ENCODE measurements at regions of chr6 and their contacts with region 1.

Region 1: GRCh38 chr6:33323623-33323948 is 6.0 kb upstream of the ZBTB22 start:
- DNase-seq: no peak
- H3K4me3 Mint-ChIP-seq: peak overlapping the region; percentile 93
- H3K27ac Mint-ChIP-seq: peak overlapping the region; percentile 94
- H3K4me1 Mint-ChIP-seq: peaks cover 39% of the 10 kb centered on the region
- H3K27me3 Mint-ChIP-seq: no peaks in the 10 kb centered on the region

Region 2: GRCh38 chr6:33288921-33289748 is 34.5 kb before region 1 on chr6 and contains the starts of genes PFDN6 and WDR46:
- intact Hi-C with region 1: loop called (anchors 1 kb)
- DNase-seq: peak; percentile 95
- H3K4me3 Mint-ChIP-seq: peak within 1 kb of the TSS; percentile 100
- H3K27ac Mint-ChIP-seq: peak within 1 kb of the TSS; percentile 95
- H3K4me1 Mint-ChIP-seq: peaks cover 28% of the 10 kb centered on the region
- H3K27me3 Mint-ChIP-seq: no peaks in the 10 kb centered on the region
- total RNA-seq, gene PFDN6: 114 and 132 TPM in 2 replicates
- total RNA-seq, gene WDR46: 106 and 120 TPM in 2 replicates

Region 3: GRCh38 chr6:33305052-33305451 is 18.5 kb before region 1 on chr6:
- intact Hi-C with region 1: no loop called
- DNase-seq: no peak
- H3K4me3 Mint-ChIP-seq: no peak overlapping the region
- H3K27ac Mint-ChIP-seq: no peak overlapping the region
- H3K4me1 Mint-ChIP-seq: peaks cover 28% of the 10 kb centered on the region
- H3K27me3 Mint-ChIP-seq: no peaks in the 10 kb centered on the region

Region 4: DNA sequence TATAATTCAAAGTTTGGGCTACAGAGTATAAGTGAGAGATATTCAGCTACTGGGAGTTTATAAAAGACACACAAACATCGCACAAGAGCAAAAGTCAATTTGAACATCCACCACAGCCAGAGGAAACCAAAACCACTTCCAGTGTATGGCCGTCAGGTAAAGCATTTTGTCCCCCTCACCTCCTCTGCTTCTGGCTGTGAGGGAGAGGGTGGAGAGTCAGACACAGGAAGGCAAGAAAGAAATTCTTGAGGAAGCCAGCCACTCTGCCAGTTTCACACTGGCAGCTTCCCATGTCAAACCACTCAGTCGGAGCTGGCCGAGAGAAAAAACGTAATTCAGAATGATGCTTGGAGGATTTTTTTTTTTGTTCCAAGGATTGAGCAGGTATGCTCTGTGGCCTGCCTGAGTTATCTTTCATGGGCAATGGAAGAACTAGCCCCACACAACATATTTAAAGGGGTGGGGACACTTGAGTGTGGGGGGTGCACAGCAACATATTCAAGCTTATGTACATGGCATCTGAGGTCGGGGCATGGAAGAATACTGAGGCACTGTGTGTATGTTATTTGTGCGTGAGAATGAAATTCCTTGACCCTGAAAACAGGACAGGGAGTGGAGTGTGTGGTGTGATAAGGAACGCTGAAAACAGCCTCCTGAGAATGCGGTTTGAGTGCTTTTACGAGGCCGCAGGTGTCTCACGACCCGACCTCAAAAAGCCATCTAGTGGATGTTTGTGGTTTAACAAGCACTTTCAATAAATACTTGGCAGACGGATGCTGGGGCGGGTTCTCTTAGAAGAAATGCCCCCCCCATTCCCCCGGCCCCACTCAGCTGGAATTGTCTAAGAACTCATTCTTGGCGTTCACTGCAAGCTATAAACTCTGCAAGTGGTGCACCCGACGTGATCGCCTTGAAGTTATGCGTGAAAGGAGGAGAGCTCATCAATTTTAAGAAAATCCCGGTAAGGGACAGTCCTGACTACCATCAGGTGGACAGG is 21.4 kb after region 1 on chr6:
- intact Hi-C with region 1: loop called (anchors 1 kb)
- DNase-seq: peak; percentile 90
- H3K4me3 Mint-ChIP-seq: peak overlapping the region; percentile 77
- H3K27ac Mint-ChIP-seq: peak overlapping the region; percentile 85
- H3K4me1 Mint-ChIP-seq: peaks cover 29% of the 10 kb centered on the region
- H3K27me3 Mint-ChIP-seq: peaks cover 7% of the 10 kb centered on the region

Region 5: DNA sequence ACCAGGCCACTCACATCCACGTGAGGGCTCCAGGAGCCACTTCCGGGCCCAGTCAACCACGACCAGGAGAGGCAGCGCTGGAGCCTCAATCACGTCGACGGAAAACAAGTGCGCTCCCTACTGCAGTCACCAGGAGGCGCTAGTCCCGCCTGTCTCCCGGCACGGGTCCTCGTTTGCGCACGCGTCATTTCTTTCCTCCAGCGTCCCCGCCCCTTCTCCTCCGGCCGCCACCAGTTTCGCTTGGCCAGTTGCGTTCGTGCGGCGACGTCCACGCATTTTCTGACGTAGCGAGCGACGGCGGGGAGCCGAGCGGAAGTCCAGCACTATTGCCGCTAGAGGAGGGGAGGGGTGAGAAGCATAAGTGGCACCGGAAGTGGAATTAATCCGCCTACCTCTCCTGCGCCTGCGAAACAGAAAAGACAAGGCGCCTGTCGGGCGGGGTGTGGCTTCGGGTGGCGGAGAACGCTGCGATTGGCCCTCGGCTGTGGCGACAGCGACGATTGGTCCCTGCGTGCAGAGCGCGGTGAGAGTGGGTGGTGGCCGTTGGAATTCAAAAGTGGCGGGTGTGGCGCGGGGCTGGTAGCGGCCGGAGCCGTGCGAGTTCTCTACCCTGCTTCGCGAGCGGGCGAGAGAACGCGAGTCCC is 67.8 kb after region 1 on chr6 and contains the start of gene KIFC1:
- intact Hi-C with region 1: loop called (anchors 1 kb)
- DNase-seq: peak; percentile 100
- H3K4me3 Mint-ChIP-seq: peak within 1 kb of the TSS; percentile 89
- H3K27ac Mint-ChIP-seq: peak within 1 kb of the TSS; percentile 97
- H3K4me1 Mint-ChIP-seq: peaks cover 42% of the 10 kb centered on the region
- H3K27me3 Mint-ChIP-seq: peaks cover 2% of the 10 kb centered on the region
- total RNA-seq, gene KIFC1: 64.9 and 66.5 TPM in 2 replicates

Measured in activated CD4-positive, alpha-beta T cell treated with anti-CD3 and anti-CD28 coated beads, Interleukin-2, amount 10 ng/mL, durations not matched to agents 24 days and 14 days (primary cell).